Dorsolateral prefrontal cortex (tissue), 120 donors: ENCODE measurements at regions of chr3 and their contacts with region 1.

Region 1: DNA sequence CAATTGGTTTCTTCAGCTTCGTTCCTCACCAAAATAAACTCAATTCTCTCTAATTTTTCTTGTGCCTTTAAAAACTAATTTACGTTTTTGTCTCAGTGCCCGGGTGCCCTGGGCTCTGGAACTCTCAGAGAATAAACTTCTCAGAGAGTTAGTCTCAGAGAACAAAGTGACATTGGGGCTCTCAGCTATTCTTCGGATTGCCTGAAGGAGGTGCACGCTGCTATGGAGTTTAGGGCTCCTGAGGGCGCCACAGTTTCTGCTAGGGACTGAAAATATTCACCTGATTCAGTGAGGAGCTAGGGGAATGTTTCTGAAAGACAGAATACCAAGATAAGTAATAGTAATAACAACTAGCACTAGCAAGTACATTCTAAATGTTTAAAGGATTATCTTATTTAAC is 22.7 kb downstream of the ZIC4 start:
- DNase-seq: peak in 1 of 10 donors; percentile 5
- H3K4me3 ChIP-seq: no peak overlapping the region
- H3K27ac ChIP-seq: peak overlapping the region in 1 of 59 donors; percentile 99
- H3K27me3 ChIP-seq: peaks cover 0 to 100% (median 61%) of the 10 kb centered on the region in 45 donors
- CTCF ChIP-seq: peak in 40 of 56 donors; percentile 7 to 58 (median 36)

Region 2: DNA sequence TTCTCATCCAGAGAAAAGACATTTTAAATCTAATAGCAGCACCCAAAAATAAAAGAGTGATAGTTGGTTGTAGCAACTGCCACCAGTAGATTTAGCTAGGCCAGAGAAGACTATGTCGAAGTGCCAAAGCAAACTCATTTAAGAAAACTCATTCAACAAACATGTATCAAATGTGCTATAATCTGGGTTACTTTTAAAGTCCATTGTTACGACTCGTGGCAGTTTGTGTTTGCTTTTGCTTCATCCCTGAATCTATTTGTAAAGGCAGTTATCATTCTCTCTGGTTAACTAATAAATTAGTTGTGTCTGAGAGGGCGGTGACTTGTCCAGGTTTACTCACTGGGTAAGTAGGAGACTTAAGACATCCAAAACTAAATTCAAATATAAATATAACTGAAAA is 136.7 kb before region 1 on chr3:
- intact Hi-C with region 1: no loop called
- DNase-seq: no peak
- H3K4me3 ChIP-seq: no peak overlapping the region
- H3K27ac ChIP-seq: no peak overlapping the region
- H3K27me3 ChIP-seq: peaks cover 0 to 1% (median 0%) of the 10 kb centered on the region in 45 donors
- CTCF ChIP-seq: no peak

Region 3: GRCh38 chr3:147336543-147337278 is 46.9 kb before region 1 on chr3:
- intact Hi-C with region 1: no loop called
- DNase-seq: no peak
- H3K4me3 ChIP-seq: no peak overlapping the region
- H3K27ac ChIP-seq: no peak overlapping the region
- H3K27me3 ChIP-seq: peaks cover 0 to 37% (median 3%) of the 10 kb centered on the region in 45 donors
- CTCF ChIP-seq: no peak

Region 4: DNA sequence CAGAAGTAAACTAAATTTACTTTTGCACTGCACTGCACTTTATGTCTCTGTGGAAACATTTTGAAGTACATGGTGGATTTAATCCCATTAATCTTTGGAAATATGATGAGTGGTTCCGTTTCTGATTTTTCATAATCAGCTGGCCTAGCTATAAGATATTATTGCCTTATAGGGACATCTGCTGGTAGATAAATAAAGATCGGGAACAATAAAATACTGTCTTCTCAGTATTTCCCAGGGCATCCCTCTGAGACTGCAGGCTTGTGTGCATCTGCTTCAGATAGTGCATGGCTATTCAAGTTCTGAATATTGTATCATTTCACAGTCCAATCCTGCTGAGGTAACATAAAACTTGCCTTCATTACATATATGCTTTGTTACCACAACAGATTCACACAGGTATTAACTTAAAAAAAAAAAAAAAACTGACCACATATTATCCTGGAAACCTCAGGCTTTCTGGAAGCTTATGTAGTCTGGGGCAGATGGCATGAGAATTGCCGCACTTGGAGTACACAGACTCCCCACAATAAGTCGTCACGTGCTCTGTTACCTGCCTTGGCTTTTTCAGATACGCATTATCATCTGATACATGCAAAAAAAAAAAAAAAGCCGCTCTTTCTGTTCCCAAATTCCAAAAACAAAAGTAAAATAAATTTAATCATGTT is 983.3 kb after region 1 on chr3:
- intact Hi-C with region 1: loop called in 1 of 2 experiments (anchors 10 kb)
- DNase-seq: peak in 2 of 10 donors; percentile 25 to 30
- H3K4me3 ChIP-seq: no peak overlapping the region
- H3K27ac ChIP-seq: no peak overlapping the region
- H3K27me3 ChIP-seq: no peaks in the 10 kb centered on the region
- CTCF ChIP-seq: peak in 55 of 56 donors; percentile 23 to 74 (median 51)